ENCODE measurements at regions of chr7 and their contacts with region 1.

Region 1: DNA sequence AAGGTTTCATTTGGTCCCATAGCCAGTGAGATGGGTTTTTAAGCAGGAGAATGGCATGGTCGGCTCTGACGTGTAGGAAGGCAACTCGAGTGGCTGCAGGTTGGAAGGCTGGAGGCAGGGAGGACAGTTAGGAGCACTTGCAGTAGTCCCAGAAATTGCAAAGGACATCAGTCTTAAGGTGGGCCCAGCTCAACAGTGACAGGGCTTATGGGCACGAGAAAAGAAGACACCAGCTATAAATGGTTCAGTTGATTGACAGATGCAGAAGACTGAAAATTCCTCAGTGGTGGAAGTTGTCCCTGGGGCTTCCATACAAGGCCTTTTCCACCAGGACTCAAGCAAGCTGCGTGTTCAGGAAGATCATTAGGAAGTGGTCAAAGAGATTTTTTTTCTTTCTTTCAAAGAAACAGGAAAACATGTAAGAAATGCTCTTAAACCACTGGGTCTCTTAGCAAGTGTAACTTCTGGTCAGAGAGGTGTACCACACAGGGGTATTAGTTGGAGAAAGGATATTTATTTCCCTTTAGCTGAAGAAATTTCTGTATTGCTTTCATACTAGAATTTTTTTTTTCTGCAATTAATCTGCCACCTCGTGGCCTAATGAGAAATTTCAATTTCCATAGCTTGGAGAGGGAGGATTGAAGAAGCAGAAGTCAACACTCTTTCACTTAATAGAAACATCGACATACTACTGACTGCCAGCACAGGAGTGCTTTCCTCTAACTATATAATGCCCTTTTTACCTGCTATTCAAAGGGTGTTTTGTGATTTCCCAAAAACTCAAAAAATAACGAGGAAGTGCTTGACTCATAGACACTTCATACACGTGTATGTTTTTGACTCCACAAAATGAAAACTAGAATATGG is 177.4 kb upstream of the NAMPT start:
- DNase-seq: peak; percentile 53 to 70 (median 58)
- H3K4me3 ChIP-seq: no peak overlapping the region
- H3K4me3 Mint-ChIP-seq: no peak overlapping the region
- H3K27ac ChIP-seq: no peak overlapping the region
- H3K27ac Mint-ChIP-seq: peak overlapping the region in 5 of 7 donors; percentile 10 to 76 (median 58)
- H3K4me1 ChIP-seq: no peaks in the 10 kb centered on the region
- H3K4me1 Mint-ChIP-seq: peaks cover 6% of the 10 kb centered on the region
- H3K27me3 ChIP-seq: no peaks in the 10 kb centered on the region
- H3K27me3 Mint-ChIP-seq: no peaks in the 10 kb centered on the region
- CTCF ChIP-seq: peak; percentile 73

Region 2: DNA sequence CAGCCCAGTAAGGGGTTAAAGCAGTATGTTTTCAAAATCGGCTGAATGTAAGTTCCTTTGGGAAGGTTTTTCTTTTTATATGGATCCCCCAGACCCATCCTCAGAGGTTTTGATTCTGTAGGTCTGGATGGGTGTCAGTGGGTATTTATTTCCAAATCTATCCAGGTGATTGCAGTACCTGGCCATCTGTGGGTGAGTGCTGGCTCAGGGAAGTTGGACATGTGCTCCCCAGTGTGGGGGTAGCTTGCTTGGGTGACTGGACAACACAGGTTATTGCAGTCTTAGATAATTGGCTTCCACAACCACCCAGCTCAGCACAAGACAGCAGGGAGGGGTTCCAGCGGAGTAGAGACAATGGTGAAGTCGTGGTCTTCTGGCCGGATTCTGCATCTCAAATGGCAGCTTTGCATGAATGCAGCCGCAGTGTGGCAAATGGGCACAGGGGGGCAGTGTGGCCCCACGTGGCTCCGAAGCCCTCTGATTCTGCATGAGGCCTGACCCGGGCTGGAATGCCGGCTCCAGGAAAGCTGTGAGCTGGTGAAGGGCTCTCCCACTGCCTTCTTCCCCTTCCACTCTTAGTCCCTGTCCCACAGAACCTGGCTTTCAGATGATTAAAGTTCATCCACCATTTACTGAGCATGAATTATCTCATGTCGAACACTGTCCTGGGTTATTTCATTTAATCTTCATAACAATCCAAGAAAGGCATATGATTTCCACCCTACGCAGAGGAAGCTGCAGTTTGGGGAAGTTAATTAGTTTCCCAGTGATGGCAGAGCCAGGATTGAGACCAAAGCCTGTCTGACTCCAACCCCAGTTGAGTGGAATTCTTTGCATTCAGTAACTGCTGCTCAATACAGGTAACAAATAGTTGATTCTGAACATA is 285.6 kb before region 1 on chr7:
- intact Hi-C with region 1: loop called in 1 of 2 experiments (anchors 5 kb)
- DNase-seq: peak; percentile 44 to 66 (median 60)
- H3K4me3 ChIP-seq: no peak overlapping the region
- H3K4me3 Mint-ChIP-seq: peak overlapping the region in 1 of 2 donors; percentile 40
- H3K27ac ChIP-seq: no peak overlapping the region
- H3K27ac Mint-ChIP-seq: peak overlapping the region in 1 of 7 donors; percentile 35
- H3K4me1 ChIP-seq: no peaks in the 10 kb centered on the region
- H3K4me1 Mint-ChIP-seq: peaks cover 4% of the 10 kb centered on the region
- H3K27me3 ChIP-seq: peaks cover 0 to 5% of the 10 kb centered on the region in 2 donors
- H3K27me3 Mint-ChIP-seq: peaks cover 9 to 26% (median 12%) of the 10 kb centered on the region in 3 donors
- CTCF ChIP-seq: peak; percentile 86

Region 3: GRCh38 chr7:106425017-106425719 is 37.1 kb before region 1 on chr7:
- intact Hi-C with region 1: loop called in 1 of 2 experiments (anchors 5 kb)
- DNase-seq: peak; percentile 98 to 100 (median 99)
- H3K4me3 ChIP-seq: peak overlapping the region in 2 of 3 experiments; percentile 10 to 14
- H3K4me3 Mint-ChIP-seq: peak overlapping the region; percentile 46 to 52
- H3K27ac ChIP-seq: peak overlapping the region; percentile 86 to 96
- H3K27ac Mint-ChIP-seq: peak overlapping the region; percentile 98 to 100 (median 99)
- H3K4me1 ChIP-seq: peaks cover 49 to 57% of the 10 kb centered on the region in 2 donors
- H3K4me1 Mint-ChIP-seq: peaks cover 56% of the 10 kb centered on the region
- H3K27me3 ChIP-seq: no peaks in the 10 kb centered on the region
- H3K27me3 Mint-ChIP-seq: peaks cover 0 to 2% (median 0%) of the 10 kb centered on the region in 3 donors
- CTCF ChIP-seq: no peak

Measured in CD14-positive monocyte (primary cell).